CD4-positive, alpha-beta memory T cell (primary cell): ENCODE measurements at regions of chr2 and their contacts with region 1.

Region 1: DNA sequence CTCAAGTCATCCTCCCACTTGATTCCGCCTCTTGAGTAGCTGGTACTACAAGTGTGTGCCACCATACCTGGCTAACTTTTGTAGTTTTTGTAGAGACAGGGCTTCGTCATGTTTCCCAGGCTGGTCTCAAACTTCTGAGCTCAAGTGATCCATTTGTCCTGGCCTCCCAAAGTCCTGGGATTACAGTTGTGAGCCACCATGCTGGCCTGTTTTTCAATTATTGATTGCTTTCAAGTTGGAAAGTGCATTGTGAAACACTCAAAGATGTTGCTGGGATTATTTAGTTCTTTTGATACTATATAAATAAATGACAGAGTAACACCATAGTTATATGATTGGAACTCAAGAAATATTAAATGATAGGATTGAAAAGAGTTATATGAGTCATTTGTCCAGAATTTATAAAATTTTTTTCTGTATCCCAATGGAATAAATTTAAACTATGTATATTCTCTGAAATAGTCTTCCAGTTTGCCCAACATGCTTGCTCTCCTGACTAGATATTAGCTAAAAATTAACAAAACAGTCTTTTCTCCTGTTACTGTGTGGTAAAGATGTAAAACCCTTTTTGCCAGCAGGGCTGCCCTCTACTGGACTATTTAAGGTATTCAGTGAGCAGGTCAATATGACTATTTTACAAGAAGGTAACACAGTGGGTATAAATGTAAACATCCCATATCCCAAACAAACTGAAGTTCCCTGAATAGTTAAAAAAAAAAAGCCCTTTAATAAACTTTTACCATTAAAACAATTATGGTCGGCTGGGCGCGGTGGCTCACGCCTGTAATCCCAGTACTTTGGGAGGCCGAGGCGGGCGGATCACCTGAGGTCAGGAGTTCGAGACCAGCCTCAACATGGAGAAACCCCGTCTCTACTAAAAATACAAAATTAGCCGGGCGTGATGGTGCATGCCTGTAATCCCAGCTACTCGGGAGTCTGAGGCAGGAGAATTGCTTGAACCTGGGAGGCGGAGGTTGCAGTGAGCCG is 42.7 kb downstream of the ACSL3 start:
- DNase-seq: peak in 4 of 5 donors; percentile 29 to 40 (median 36)
- H3K4me3 ChIP-seq: no peak overlapping the region
- H3K4me3 Mint-ChIP-seq: no peak overlapping the region
- H3K27ac ChIP-seq: no peak overlapping the region
- H3K27ac Mint-ChIP-seq: peak overlapping the region in 1 of 7 donors; percentile 31
- H3K4me1 ChIP-seq: no peaks in the 10 kb centered on the region
- H3K4me1 Mint-ChIP-seq: peaks cover 11 to 16% (median 13%) of the 10 kb centered on the region in 4 donors
- H3K27me3 ChIP-seq: no peaks in the 10 kb centered on the region
- H3K27me3 Mint-ChIP-seq: no peaks in the 10 kb centered on the region

Region 2: GRCh38 chr2:222707689-222708525 is 195.6 kb before region 1 on chr2:
- CTCF ChIA-PET with region 1: interaction called, 79 read pairs
- POLR2A ChIA-PET with region 1: no interaction called
- intact Hi-C with region 1: no loop called
- DNase-seq: peak; percentile 53 to 64 (median 59)
- H3K4me3 ChIP-seq: no peak overlapping the region
- H3K4me3 Mint-ChIP-seq: no peak overlapping the region
- H3K27ac ChIP-seq: no peak overlapping the region
- H3K27ac Mint-ChIP-seq: peak overlapping the region in 1 of 7 donors; percentile 48
- H3K4me1 ChIP-seq: peaks cover 6% of the 10 kb centered on the region
- H3K4me1 Mint-ChIP-seq: no peaks in the 10 kb centered on the region
- H3K27me3 ChIP-seq: no peaks in the 10 kb centered on the region
- H3K27me3 Mint-ChIP-seq: peaks cover 29 to 36% of the 10 kb centered on the region in 2 donors

Region 3: DNA sequence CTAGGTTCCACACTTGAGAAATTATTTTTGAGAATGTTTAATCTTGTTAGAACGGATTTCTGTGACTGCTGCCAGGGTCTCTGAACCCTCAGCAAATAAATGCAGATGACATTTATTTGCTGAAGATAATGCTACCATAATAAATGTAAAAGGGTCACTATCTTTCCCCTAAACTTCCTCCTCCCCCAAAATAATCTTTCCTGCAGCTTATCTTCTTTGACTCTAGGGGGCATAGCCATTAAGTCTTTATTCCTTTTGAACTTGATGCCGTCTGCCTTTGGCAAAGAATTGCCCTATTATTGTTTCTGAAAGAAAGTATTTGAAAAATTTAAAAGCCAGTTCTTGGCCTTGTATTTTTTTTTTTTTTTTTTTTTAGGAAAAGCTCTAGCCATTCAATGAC is 106.3 kb before region 1 on chr2:
- CTCF ChIA-PET with region 1: interaction called, 4 read pairs
- POLR2A ChIA-PET with region 1: no interaction called
- intact Hi-C with region 1: loop called (anchors 5 kb)
- DNase-seq: no peak
- H3K4me3 ChIP-seq: no peak overlapping the region
- H3K4me3 Mint-ChIP-seq: no peak overlapping the region
- H3K27ac ChIP-seq: no peak overlapping the region
- H3K27ac Mint-ChIP-seq: no peak overlapping the region
- H3K4me1 ChIP-seq: no peaks in the 10 kb centered on the region
- H3K4me1 Mint-ChIP-seq: no peaks in the 10 kb centered on the region
- H3K27me3 ChIP-seq: no peaks in the 10 kb centered on the region
- H3K27me3 Mint-ChIP-seq: peaks cover 0 to 3% of the 10 kb centered on the region in 2 donors

Region 4: GRCh38 chr2:222860740-222861410 is 42.7 kb before region 1 on chr2 and contains the start of gene ACSL3:
- CTCF ChIA-PET with region 1: interaction called, 8 read pairs
- POLR2A ChIA-PET with region 1: interaction called, 4 read pairs
- intact Hi-C with region 1: loop called (anchors 1 kb)
- DNase-seq: peak; percentile 88 to 91 (median 91)
- H3K4me3 ChIP-seq: peak within 1 kb of the TSS; percentile 57 to 63
- H3K4me3 Mint-ChIP-seq: peak within 1 kb of the TSS; percentile 73 to 86 (median 82)
- H3K27ac ChIP-seq: peak within 1 kb of the TSS; percentile 67
- H3K27ac Mint-ChIP-seq: peak within 1 kb of the TSS; percentile 59 to 97 (median 94)
- H3K4me1 ChIP-seq: peaks cover 42% of the 10 kb centered on the region
- H3K4me1 Mint-ChIP-seq: peaks cover 4 to 11% (median 6%) of the 10 kb centered on the region in 4 donors
- H3K27me3 ChIP-seq: no peaks in the 10 kb centered on the region
- H3K27me3 Mint-ChIP-seq: no peaks in the 10 kb centered on the region
- total RNA-seq, gene ACSL3: 24.8 to 30.9 TPM

Region 5: GRCh38 chr2:222998459-222998858 is 94.9 kb after region 1 on chr2:
- CTCF ChIA-PET with region 1: no interaction called
- POLR2A ChIA-PET with region 1: no interaction called
- intact Hi-C with region 1: no loop called
- DNase-seq: no peak
- H3K4me3 ChIP-seq: no peak overlapping the region
- H3K4me3 Mint-ChIP-seq: no peak overlapping the region
- H3K27ac ChIP-seq: no peak overlapping the region
- H3K27ac Mint-ChIP-seq: no peak overlapping the region
- H3K4me1 ChIP-seq: no peaks in the 10 kb centered on the region
- H3K4me1 Mint-ChIP-seq: no peaks in the 10 kb centered on the region
- H3K27me3 ChIP-seq: no peaks in the 10 kb centered on the region
- H3K27me3 Mint-ChIP-seq: peaks cover 0 to 6% of the 10 kb centered on the region in 2 donors